HEK293 (cell line): ENCODE measurements at regions of chr11 and their contacts with region 1.

Region 1: GRCh38 chr11:126062679-126063506 is at the start of gene CDON:
- H3K4me3 ChIP-seq: peak within 1 kb of the TSS; percentile 62
- H3K27ac ChIP-seq: peak within 1 kb of the TSS; percentile 99
- H3K4me1 ChIP-seq: peaks cover 13% of the 10 kb centered on the region
- CTCF ChIP-seq: 0 out of 2 replicates have a peak, but pooled peaks have one; percentile 37

Region 2: GRCh38 chr11:125929445-125930075 is 133.3 kb before region 1 on chr11:
- CTCF ChIA-PET with region 1: interaction called, 18 read pairs
- POLR2A ChIA-PET with region 1: no interaction called
- H3K4me3 ChIP-seq: no peak overlapping the region
- H3K27ac ChIP-seq: no peak overlapping the region
- H3K4me1 ChIP-seq: no peaks in the 10 kb centered on the region
- CTCF ChIP-seq: no peak

Region 3: GRCh38 chr11:125941619-125942611 is 121.0 kb before region 1 on chr11:
- CTCF ChIA-PET with region 1: interaction called, 34 read pairs
- POLR2A ChIA-PET with region 1: interaction called, 5 read pairs
- H3K4me3 ChIP-seq: no peak overlapping the region
- H3K27ac ChIP-seq: no peak overlapping the region
- H3K4me1 ChIP-seq: no peaks in the 10 kb centered on the region
- CTCF ChIP-seq: peak; percentile 32; the same call in 1 of the 2 replicates

Region 4: DNA sequence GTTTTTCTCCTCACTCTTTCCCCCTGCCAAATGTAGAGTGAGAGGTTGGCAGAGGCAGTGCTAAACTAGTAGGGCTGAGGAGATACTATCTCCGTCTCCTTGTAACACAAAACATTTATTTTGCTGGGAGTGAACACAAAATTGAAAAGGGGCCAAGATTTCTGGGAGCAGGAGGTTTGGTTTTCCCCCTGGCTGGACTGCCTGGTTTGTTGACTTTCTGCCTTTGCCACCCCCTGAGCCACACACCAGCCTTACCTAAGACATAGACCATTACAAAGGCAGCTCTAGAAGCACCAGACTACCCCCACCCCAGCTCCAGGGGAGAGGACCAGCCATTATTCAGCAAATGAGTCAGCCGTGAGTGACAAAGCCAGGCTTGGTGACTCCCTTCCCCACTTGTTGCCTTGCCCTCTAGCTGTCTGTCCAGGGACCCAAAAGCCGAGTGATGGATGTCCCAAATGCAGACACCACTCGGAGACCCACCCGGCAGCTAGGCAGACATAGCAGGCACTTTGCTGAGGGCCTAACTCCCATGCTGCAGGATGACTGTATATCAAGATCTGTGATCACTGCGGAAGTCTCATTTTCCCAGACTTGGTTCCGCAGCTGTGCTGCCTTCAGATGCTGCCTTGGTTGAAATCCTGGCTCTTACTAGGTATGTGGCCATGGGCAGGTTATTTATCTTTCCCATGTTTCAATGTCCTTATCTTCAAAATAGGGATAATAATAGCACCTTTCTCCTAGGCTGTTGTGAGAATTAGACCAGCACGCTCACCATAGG is 17.5 kb after region 1 on chr11:
- CTCF ChIA-PET with region 1: interaction called, 11 read pairs
- POLR2A ChIA-PET with region 1: interaction called, 4 read pairs
- H3K4me3 ChIP-seq: no peak overlapping the region
- H3K27ac ChIP-seq: peak overlapping the region; percentile 58
- H3K4me1 ChIP-seq: peaks cover 5% of the 10 kb centered on the region
- CTCF ChIP-seq: no peak